ENCODE measurements at regions of chr6 and their contacts with region 1.

Region 1: DNA sequence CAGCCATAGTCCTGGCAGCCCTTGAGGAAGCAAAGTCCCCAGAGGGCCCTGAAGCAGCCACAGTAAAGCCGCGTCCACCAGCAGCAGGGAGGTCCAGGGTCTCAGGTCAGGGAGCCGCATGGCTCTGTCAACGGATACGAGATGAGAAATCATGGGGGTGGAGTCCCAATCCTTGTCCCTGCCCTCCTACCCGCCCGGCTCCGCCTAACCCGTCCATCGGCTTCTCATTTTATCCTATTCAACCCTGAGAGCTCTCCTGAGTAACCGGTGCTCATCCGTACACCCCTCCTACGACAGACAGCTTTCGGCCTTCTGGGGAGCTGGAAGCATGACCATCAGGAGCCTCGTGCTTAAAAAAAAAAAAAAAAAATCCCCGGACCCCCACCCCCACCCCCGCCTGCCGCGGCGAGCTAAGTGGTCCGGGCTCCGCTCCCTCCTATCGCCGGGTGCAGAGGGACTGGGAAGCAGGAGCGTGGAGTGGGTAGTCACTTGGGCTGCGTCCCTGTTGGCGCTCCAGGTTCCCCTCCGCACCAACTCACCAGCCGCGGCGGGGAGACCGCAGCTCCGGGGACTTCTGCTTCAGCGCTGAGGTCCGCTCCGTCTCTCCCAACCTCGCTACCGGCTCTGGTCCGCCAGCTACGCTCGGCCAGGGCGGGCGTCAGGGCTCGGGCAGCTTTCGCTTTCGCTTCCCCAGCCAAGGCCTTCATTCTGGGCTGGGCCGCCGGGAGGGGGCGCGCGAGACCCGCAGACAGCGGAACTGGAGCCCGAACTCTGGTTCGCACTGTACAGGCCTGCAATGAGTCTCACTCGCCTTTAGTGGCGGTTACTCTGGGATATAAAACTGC is at the start of gene TAP2:
- DNase-seq: peak; percentile 95 to 97
- H3K4me3 ChIP-seq: peak within 1 kb of the TSS; percentile 19 to 71 (median 49)
- H3K27ac ChIP-seq: peak within 1 kb of the TSS; percentile 79 to 98 (median 82)
- H3K4me1 ChIP-seq: peaks cover 7 to 22% of the 10 kb centered on the region in 2 donors
- H3K27me3 ChIP-seq: no peaks in the 10 kb centered on the region
- CTCF ChIP-seq: peak; percentile 80 to 98 (median 94)
- POLR2A ChIP-seq: peak in 1 of 2 donors; percentile 61
- total RNA-seq, gene TAP2: 6.9 to 31.9 (median 8.2) TPM

Region 2: DNA sequence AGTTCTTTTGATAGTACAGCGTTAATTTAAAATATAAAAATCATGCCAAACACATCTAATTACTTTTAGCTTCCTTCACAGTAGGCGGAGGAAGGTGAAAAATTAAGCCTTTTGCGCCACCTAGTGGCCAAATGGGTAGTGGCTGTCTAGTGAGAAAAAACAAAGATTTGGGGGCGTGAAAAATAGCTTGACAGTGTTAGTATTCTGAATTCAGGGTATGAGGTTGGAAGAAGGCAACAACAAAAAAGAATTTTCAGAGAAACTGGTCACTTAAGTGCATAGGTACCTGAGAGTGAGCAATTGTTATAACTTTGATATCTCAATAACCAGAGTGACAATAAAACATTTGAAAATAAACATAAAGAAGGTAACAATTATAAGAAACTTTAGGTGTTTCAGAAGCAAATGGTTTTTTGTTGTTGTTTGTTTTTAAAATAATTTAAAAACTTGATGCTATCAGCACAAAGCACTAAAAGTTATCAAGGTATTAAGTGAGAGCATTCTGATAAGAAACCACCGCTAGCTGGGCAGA is 30.0 kb after region 1 on chr6:
- intact Hi-C with region 1: loop called (anchors 5 kb)
- DNase-seq: peak; percentile 76 to 88
- H3K4me3 ChIP-seq: no peak overlapping the region
- H3K27ac ChIP-seq: no peak overlapping the region
- H3K4me1 ChIP-seq: no peaks in the 10 kb centered on the region
- H3K27me3 ChIP-seq: no peaks in the 10 kb centered on the region
- CTCF ChIP-seq: peak; percentile 87 to 96 (median 88)
- POLR2A ChIP-seq: no peak

Measured in thyroid gland (tissue), 4 donors.